IMR-90 (cell line): ENCODE measurements at regions of chr17 and their contacts with region 1.

Region 1: GRCh38 chr17:28112220-28113005 is 69.9 kb downstream of the NLK start:
- DNase-seq: peak; percentile 35
- ATAC-seq: peak; percentile 73
- H3K4me3 ChIP-seq: no peak overlapping the region
- H3K27ac ChIP-seq: peak overlapping the region; percentile 57; the same call in 1 of the 2 replicates
- H3K4me1 ChIP-seq: peaks cover 7% of the 10 kb centered on the region
- H3K27me3 ChIP-seq: no peaks in the 10 kb centered on the region
- CTCF ChIP-seq: no peak
- POLR2A ChIP-seq: no peak
- RAD21 ChIP-seq: no peak

Region 2: DNA sequence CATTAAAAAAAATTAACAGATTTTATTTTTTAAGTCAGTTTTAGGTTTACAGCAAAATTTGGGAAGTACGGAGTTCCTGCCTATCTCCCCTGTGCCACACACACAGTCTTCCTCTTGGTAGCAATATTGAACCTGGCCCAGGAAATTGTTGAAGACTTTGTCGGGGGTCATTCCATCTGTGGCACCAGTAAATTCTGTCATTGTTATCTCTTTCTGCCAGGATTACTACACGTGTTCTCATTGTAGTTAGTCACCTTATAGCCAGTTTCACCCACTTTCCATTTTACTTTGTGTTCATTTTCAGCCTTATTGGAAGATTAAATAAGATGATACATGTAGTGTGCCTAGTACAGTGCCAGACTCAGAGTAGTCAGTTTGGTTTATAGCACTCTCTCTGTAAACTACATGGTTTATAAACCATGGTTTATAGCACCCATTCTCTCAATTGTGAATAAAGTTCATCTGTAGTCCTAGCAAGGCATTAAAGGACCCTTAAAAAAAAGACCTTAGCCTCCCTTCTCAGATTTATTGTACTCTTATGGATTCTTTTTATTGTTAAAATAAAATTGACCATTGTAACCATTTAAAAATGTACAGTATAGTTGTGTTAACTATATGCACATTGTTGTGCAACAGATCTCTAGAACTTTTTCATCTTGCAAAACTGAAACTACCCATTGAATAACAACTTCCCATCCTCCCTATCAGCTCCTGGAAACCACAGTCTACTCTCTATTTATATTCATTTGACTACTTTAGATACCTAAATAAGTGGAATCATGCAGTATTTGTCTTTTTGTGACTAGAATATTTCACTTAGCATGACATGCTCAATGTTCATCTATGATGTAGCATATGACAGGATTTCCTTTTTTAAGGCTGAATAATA is 33.8 kb before region 1 on chr17:
- CTCF ChIA-PET with region 1: no interaction called
- POLR2A ChIA-PET with region 1: no interaction called
- dilution Hi-C with region 1: no loop called
- in situ Hi-C with region 1: no loop called
- intact Hi-C with region 1: loop called (anchors 5 kb)
- DNase-seq: peak; percentile 21
- ATAC-seq: peak; percentile 27; the same call in 1 of the 2 replicates
- H3K4me3 ChIP-seq: no peak overlapping the region
- H3K27ac ChIP-seq: no peak overlapping the region
- H3K4me1 ChIP-seq: peaks cover 3% of the 10 kb centered on the region
- H3K27me3 ChIP-seq: no peaks in the 10 kb centered on the region
- CTCF ChIP-seq: no peak
- POLR2A ChIP-seq: no peak
- RAD21 ChIP-seq: no peak

Region 3: GRCh38 chr17:28093999-28094716 is 18.3 kb before region 1 on chr17:
- CTCF ChIA-PET with region 1: no interaction called
- POLR2A ChIA-PET with region 1: no interaction called
- dilution Hi-C with region 1: no loop called
- in situ Hi-C with region 1: no loop called
- intact Hi-C with region 1: no loop called
- DNase-seq: no peak
- ATAC-seq: no peak
- H3K4me3 ChIP-seq: no peak overlapping the region
- H3K27ac ChIP-seq: no peak overlapping the region
- H3K4me1 ChIP-seq: 0 out of 2 replicates have a peak, but pooled peaks cover 1% of the 10 kb centered on the region
- H3K27me3 ChIP-seq: no peaks in the 10 kb centered on the region
- CTCF ChIP-seq: no peak
- POLR2A ChIP-seq: no peak
- RAD21 ChIP-seq: no peak

Region 4: DNA sequence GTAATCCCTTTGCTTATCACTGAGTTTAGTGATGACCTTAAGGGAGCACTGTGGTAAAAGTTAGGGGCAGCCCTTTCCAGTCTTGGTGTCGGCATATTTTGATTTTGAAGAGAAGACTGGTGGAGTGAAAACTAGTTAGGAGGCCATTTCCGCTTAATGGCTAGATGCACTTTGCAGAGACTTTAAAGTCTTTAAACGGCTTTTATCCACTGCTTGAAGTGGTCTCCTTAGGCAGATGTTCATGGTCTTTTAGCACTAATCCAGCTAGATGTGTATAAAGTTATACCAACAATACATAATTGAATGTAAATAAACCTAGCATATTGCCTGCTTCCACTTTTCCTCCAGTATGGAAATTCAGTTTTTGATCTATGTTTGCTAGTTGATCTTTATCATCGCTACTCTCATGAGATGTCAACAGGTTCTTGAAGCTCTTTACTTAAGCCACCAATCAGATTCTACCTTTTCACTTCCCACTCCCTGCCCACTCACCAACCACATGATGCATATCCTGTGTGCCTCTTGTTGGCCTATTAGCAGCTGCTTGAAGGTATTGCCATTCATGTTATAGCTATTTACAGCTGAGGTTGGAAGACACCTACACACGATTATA is 62.0 kb after region 1 on chr17:
- CTCF ChIA-PET with region 1: no interaction called
- POLR2A ChIA-PET with region 1: no interaction called
- dilution Hi-C with region 1: no loop called
- in situ Hi-C with region 1: no loop called
- intact Hi-C with region 1: no loop called
- DNase-seq: no peak
- ATAC-seq: no peak
- H3K4me3 ChIP-seq: no peak overlapping the region
- H3K27ac ChIP-seq: peak overlapping the region; percentile 55
- H3K4me1 ChIP-seq: peaks cover 18% of the 10 kb centered on the region
- H3K27me3 ChIP-seq: no peaks in the 10 kb centered on the region
- CTCF ChIP-seq: no peak
- POLR2A ChIP-seq: no peak
- RAD21 ChIP-seq: no peak

Region 5: DNA sequence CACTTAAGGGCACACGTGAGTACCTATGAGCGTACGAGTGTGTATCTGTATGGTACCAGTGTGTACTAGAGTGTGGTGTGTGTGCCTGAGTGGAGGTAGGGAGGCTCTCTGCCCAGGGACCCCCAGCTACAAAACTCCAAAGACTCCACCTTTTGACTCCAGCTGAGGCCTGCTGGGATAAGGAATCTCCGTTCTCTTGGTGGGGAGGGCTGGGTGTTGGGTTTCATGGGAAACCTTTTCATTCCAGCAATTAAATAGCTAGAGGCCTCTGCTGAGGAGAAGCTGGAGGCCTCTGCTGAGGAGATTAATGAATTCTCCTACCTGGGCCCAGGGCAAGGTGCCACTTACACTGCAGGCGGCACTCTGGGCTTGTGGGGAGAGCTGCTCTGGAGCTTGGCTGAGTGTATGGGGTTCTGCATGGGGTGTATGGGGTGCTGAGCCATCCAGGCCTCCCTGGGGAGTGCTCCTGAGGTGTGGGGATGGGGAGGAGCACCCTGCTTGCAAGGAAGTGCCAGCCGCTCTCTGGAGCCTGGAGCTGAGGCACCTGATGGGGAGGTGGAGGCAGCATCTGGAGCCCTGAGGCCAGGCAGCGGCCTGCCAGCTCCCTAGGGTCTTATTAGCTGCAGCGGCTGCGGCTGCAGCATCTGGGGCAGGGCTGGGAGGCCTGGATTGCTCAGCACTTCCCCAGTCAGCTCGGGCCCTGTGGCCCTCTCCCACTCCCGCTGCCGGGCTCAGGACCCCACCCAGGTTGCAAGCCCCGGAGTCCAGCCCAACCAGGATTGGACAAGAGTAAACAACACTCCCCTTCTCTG is 1485.2 kb after region 1 on chr17:
- CTCF ChIA-PET with region 1: no interaction called
- POLR2A ChIA-PET with region 1: no interaction called
- dilution Hi-C with region 1: no loop called
- in situ Hi-C with region 1: no loop called
- intact Hi-C with region 1: no loop called
- DNase-seq: no peak
- ATAC-seq: no peak
- H3K4me3 ChIP-seq: no peak overlapping the region
- H3K27ac ChIP-seq: no peak overlapping the region
- H3K4me1 ChIP-seq: peaks cover 7% of the 10 kb centered on the region
- H3K27me3 ChIP-seq: peaks cover 2% of the 10 kb centered on the region; the same call in 1 of the 2 replicates
- CTCF ChIP-seq: no peak
- POLR2A ChIP-seq: no peak
- RAD21 ChIP-seq: no peak